ENCODE measurements at regions of chr1 and their contacts with region 1.

Region 1: GRCh38 chr1:207890136-207890738 is 20.7 kb downstream of the CD34 start:
- DNase-seq: peak; percentile 66 to 79
- H3K4me3 ChIP-seq: no peak overlapping the region
- H3K27ac ChIP-seq: peak overlapping the region; percentile 26 to 86 (median 79)
- H3K4me1 ChIP-seq: peaks cover 32 to 52% (median 34%) of the 10 kb centered on the region in 4 donors
- H3K27me3 ChIP-seq: no peaks in the 10 kb centered on the region
- CTCF ChIP-seq: no peak
- EP300 ChIP-seq: no peak
- POLR2A ChIP-seq: no peak

Region 2: DNA sequence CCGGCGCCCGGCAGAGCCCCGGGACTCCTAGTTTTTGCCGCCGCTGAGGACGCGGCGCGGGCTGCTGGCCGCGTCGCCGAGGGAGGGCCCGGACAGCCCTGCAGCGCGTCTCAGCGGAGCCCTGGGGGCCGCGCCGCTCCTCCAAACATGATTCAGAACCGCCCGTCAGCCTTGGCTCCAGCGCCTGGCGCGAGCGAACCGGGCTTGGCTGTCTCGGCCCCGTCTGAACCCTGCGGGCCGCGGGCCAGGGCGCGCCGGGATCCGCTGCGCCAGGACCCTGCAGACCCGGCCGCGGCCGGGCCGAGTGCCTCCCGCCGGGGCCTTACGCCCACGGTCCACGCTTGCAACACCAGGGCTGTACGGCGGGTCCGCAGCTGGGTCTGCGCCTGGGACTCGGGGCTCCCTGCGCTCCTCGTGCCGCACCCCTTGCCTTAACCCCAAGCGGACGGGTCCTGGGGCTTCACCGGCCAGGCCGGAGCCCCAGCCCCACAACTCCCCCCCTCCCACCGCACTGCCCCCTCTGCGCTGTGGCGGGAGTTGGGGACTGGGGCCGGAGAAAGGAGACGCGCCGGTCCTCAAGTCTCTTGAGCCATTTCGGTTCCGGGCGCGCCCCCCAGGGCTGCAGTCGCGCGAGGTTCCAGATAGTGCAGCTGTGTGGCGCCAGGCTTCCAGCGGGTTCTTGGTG is 69.0 kb after region 1 on chr1:
- intact Hi-C with region 1: loop called (anchors 5 kb)
- DNase-seq: peak; percentile 68 to 85
- H3K4me3 ChIP-seq: peak overlapping the region; percentile 43 to 58 (median 52)
- H3K27ac ChIP-seq: peak overlapping the region; percentile 60 to 98 (median 93)
- H3K4me1 ChIP-seq: peaks cover 30 to 61% (median 53%) of the 10 kb centered on the region in 4 donors
- H3K27me3 ChIP-seq: peaks cover 0 to 14% (median 0%) of the 10 kb centered on the region in 3 donors
- CTCF ChIP-seq: no peak
- EP300 ChIP-seq: no peak
- POLR2A ChIP-seq: no peak